Body of pancreas (tissue), 4 donors: ENCODE measurements at regions of chr15 and their contacts with region 1.

Region 1: GRCh38 chr15:92724144-92724543 is 68.6 kb upstream of the FAM174B start:
- DNase-seq: no peak
- ATAC-seq: no peak
- H3K4me3 ChIP-seq: no peak overlapping the region
- H3K27ac ChIP-seq: no peak overlapping the region
- H3K4me1 ChIP-seq: no peaks in the 10 kb centered on the region
- H3K27me3 ChIP-seq: no peaks in the 10 kb centered on the region
- CTCF ChIP-seq: no peak
- POLR2A ChIP-seq: no peak

Region 2: DNA sequence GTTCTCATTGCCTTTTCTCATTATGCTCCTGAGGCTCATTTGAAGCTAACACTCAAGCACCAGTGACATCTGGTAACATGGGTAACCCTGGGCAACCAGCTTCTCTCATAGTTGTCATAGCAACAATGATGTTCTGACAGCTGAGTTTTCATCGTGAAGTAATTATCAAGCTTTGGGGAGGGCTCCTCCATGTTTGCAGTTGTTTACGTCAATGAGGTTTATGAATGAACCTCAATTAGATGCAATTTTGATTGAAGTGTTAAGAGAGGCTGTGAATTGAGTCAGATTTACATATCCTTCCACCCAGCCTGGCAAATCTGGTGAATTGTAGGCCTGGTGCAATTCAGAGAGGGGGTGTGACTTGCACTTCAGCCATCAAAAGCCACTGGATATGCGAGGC is 56.7 kb after region 1 on chr15:
- intact Hi-C with region 1: loop called (anchors 10 kb)
- DNase-seq: no peak
- ATAC-seq: no peak
- H3K4me3 ChIP-seq: no peak overlapping the region
- H3K27ac ChIP-seq: no peak overlapping the region
- H3K4me1 ChIP-seq: no peaks in the 10 kb centered on the region
- H3K27me3 ChIP-seq: no peaks in the 10 kb centered on the region
- CTCF ChIP-seq: no peak
- POLR2A ChIP-seq: no peak